ENCODE measurements at regions of chr3 and their contacts with region 1.

Region 1: DNA sequence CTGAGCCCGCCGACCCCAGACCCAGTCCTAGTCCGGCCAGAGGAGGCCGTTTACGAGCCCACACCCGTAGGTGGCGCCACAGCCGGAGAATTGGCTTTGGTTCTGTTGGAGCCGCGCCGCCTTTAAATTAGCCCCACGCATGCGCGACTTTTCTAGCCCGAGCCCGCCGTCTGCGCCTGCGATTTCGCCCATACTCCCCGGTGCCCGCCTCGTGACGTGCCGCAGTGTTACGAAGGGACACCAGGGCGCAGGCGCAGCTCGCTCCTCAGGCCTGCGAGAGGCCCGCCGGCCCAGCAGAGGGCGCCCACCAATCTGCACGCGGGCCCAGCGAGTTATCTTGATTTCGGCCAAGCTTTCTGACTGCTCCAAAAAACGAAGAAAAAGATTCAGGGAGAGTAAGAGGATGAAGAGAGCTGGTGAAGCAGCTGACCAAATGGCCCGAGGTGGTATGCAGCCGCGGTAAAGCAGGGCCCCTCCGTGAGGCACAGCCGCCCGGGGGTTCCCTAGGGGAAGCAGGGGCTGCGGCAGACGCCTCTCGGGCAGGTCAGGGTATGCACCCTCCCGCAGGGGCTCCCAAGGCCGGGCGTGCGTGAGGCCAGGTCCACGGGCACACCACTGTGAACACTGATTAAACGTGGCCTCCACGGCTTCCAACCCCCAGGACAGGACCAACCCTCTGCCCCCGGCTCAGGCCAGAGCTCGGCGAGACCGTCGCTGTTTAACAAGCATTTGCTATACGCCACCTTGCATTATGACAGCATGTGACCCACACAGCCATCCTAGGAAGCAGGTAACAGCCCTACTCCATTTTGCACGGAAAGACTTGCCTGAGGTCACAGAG is 32.8 kb downstream of the RPN1 start:
- DNase-seq: peak; percentile 90 to 100 (median 99)
- ATAC-seq: peak; percentile 89 to 94 (median 90)
- H3K4me3 ChIP-seq: peak overlapping the region; percentile 90 to 95
- H3K4me3 Mint-ChIP-seq: peak overlapping the region; percentile 82 to 96 (median 87)
- H3K27ac ChIP-seq: peak overlapping the region; percentile 88
- H3K27ac Mint-ChIP-seq: peak overlapping the region; percentile 89 to 93
- H3K4me1 ChIP-seq: peaks cover 10 to 35% of the 10 kb centered on the region in 2 experiments
- H3K4me1 Mint-ChIP-seq: peaks cover 24 to 32% (median 30%) of the 10 kb centered on the region in 3 donors
- H3K27me3 ChIP-seq: no peaks in the 10 kb centered on the region
- H3K27me3 Mint-ChIP-seq: no peaks in the 10 kb centered on the region

Region 2: GRCh38 chr3:128650096-128651050 is 32.6 kb after region 1 on chr3 and contains the start of gene RPN1:
- CTCF ChIA-PET with region 1: interaction called in 1 of 2 experiments, 14 read pairs
- POLR2A ChIA-PET with region 1: no interaction called
- DNase-seq: peak; percentile 87 to 98 (median 96)
- ATAC-seq: peak; percentile 95 to 99 (median 98)
- H3K4me3 ChIP-seq: peak within 1 kb of the TSS; percentile 92 to 99
- H3K4me3 Mint-ChIP-seq: peak within 1 kb of the TSS; percentile 84 to 86 (median 86)
- H3K27ac ChIP-seq: peak within 1 kb of the TSS; percentile 90
- H3K27ac Mint-ChIP-seq: peak within 1 kb of the TSS; percentile 78 to 82
- H3K4me1 ChIP-seq: peaks cover 16 to 26% of the 10 kb centered on the region in 2 experiments
- H3K4me1 Mint-ChIP-seq: peaks cover 39 to 45% (median 44%) of the 10 kb centered on the region in 3 donors
- H3K27me3 ChIP-seq: no peaks in the 10 kb centered on the region
- H3K27me3 Mint-ChIP-seq: no peaks in the 10 kb centered on the region
- total RNA-seq, gene RPN1: 86.1 to 119 (median 100) TPM

Region 3: GRCh38 chr3:128804017-128804810 is 186.4 kb after region 1 on chr3:
- CTCF ChIA-PET with region 1: interaction called, 3 to 13 read pairs
- POLR2A ChIA-PET with region 1: no interaction called
- DNase-seq: peak; percentile 15 to 87 (median 60)
- ATAC-seq: peak; percentile 90 to 95 (median 94)
- H3K4me3 ChIP-seq: peak overlapping the region; percentile 32 to 34
- H3K4me3 Mint-ChIP-seq: peak overlapping the region; percentile 71 to 75 (median 72)
- H3K27ac ChIP-seq: peak overlapping the region; percentile 86
- H3K27ac Mint-ChIP-seq: peak overlapping the region; percentile 90 to 94
- H3K4me1 ChIP-seq: peaks cover 33 to 36% of the 10 kb centered on the region in 2 experiments
- H3K4me1 Mint-ChIP-seq: peaks cover 79 to 82% (median 80%) of the 10 kb centered on the region in 3 donors
- H3K27me3 ChIP-seq: no peaks in the 10 kb centered on the region
- H3K27me3 Mint-ChIP-seq: no peaks in the 10 kb centered on the region

Measured in T-cell (primary cell).